ENCODE measurements at regions of chr10 and their contacts with region 1.

Region 1: DNA sequence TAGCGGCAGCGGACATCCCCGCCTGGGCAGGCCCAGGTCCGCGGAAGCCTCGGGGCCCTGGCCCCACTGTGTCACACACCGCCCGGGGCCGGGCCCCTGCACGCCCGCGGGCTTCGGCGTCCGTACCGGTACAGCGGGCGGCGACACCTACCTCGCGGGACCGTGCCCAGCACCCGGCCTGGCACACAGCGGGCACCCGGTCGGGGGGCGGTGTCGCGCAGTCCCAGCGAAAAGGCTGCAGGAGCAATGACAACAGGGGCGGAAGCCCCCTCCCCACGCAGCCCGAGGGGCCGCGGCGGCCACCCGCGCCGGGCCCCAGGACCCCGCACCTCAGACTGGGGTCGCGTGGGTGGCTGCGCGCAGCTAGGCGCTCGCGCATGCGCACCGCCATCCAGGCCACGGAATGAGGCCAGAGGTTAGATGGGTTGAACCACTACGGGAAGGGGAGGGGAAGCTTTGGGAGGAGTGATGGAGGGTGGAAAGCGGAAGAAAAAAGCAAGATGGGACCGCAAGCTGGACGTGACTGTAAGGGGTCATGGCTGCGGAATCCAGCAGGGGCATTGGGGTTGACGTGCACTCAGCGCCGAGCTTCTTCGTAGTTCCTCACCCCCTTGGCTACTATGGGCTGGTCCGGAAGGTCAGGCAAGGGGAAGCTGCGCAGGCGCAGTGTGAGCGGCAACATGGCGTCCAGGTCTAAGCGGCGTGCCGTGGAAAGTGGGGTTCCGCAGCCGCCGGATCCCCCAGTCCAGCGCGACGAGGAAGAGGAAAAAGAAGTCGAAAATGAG is at the starts of genes BCCIP and UROS:
- DNase-seq: peak; percentile 87
- ATAC-seq: peak; percentile 80
- H3K4me3 ChIP-seq: peak within 1 kb of the TSS; percentile 92
- H3K27ac ChIP-seq: peak within 1 kb of the TSS; percentile 97
- H3K4me1 ChIP-seq: peaks cover 9% of the 10 kb centered on the region; the same call in 1 of the 2 replicates
- H3K27me3 ChIP-seq: no peaks in the 10 kb centered on the region
- CTCF ChIP-seq: no peak
- EP300 ChIP-seq: no peak
- POLR2A ChIP-seq: peak; percentile 88
- RAD21 ChIP-seq: no peak
- polyA plus RNA-seq, gene BCCIP: 150 to 158 TPM
- polyA plus RNA-seq, gene UROS: 4.3 to 13.6 TPM

Region 2: DNA sequence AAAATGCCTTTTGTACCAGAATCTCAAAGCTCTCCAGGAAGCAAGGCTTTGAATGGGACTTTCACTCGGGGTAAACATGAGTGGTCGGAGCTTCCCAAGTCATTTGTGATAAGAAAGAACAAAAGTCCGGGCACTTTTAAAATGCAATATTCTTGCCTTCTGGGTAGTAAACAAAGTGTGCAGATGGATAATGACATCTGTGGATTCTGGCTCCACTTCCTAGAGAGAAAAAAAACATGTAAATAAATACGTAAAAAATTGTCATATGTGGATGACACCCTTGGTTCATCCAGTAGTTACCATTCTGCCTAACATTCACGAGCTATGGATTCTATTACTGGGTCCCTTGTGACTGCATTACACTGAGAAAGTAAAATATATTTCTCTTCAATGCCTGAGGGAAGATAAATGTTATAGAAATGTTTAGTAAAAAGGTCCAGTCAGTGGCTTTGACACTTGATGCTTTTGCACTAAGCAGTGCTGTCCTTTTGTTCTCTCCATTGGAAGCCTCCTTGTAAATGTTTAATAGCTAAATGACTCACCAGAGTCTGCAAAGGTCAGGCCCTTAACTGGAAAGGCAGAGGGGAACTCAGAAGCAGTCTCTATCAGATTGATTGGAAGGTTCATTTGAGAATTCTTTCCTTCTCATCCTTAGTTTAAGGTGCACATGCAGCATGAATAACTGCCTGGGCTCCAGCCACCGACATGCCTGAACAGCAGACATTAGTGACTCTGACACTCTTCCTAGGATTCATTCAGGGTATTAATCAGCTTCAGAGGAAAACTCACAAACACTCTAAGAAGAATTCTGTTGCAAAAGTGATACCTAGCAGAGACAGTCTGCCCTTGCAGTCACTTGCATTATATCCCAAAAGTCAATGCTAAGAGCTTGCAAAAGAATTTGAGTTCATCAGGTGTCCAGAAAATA is 115.3 kb before region 1 on chr10:
- CTCF ChIA-PET with region 1: no interaction called
- POLR2A ChIA-PET with region 1: no interaction called
- RAD21 ChIA-PET with region 1: no interaction called
- SMC1A ChIA-PET with region 1: no interaction called
- in situ Hi-C with region 1: no loop called
- intact Hi-C with region 1: no loop called
- DNase-seq: no peak
- ATAC-seq: peak; percentile 66
- H3K4me3 ChIP-seq: no peak overlapping the region
- H3K27ac ChIP-seq: no peak overlapping the region
- H3K4me1 ChIP-seq: no peaks in the 10 kb centered on the region
- H3K27me3 ChIP-seq: no peaks in the 10 kb centered on the region
- CTCF ChIP-seq: no peak
- EP300 ChIP-seq: no peak
- POLR2A ChIP-seq: no peak
- RAD21 ChIP-seq: no peak

Region 3: DNA sequence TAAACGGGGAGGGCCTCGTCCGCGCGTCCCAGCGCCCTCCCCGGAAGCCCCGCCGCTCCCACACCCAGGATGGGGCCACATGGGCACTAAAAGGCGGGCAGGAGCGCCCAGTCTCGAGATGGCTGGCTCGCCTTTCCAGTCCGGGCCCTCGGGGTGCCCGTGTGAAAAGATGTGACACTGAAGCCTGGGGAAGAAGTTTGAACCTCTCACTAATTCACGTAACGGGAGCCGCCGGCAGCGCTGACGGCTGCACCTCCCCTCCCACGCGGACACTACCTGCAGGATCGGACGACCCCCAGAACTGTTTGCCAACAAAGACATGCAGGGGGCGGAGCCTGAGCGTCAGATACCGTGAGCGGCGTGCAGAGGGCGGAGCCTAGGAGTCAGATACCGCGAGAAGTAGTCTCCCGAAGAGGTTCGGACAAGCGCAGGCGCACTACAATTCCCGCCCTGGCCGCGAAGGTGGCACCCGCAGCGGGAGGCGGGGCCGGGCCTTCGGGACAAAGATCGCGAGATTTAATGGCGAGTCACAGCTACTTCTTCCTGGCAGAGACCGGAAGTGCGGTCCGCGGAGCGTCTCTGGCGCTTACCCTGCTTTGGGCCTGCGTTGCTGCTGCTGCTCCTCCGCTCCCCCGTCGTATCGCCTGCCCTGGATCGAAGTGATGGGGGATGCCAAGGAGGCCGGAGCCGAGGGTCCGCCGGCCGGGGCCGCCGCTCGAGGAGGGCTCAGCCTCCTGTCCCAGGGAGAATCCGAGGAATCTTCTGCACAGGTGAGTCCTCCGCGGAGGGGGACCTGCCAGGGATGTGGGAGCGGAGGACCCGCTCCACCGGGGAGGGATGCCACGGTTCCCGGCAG is 103.7 kb before region 1 on chr10 and contains the start of gene EDRF1:
- CTCF ChIA-PET with region 1: no interaction called
- POLR2A ChIA-PET with region 1: interaction called, 6 read pairs
- RAD21 ChIA-PET with region 1: interaction called, 4 read pairs
- SMC1A ChIA-PET with region 1: no interaction called
- in situ Hi-C with region 1: no loop called
- intact Hi-C with region 1: loop called (anchors 1 kb)
- DNase-seq: peak; percentile 97
- ATAC-seq: peak; percentile 93
- H3K4me3 ChIP-seq: peak within 1 kb of the TSS; percentile 85
- H3K27ac ChIP-seq: peak within 1 kb of the TSS; percentile 92
- H3K4me1 ChIP-seq: peaks cover 3% of the 10 kb centered on the region; the same call in 1 of the 2 replicates
- H3K27me3 ChIP-seq: no peaks in the 10 kb centered on the region
- CTCF ChIP-seq: no peak
- EP300 ChIP-seq: no peak
- POLR2A ChIP-seq: peak; percentile 99
- RAD21 ChIP-seq: no peak
- polyA plus RNA-seq, gene EDRF1: 16.8 to 21.2 TPM

Region 4: GRCh38 chr10:125783957-125784356 is 39.1 kb before region 1 on chr10:
- CTCF ChIA-PET with region 1: interaction called, 3 read pairs
- POLR2A ChIA-PET with region 1: no interaction called
- RAD21 ChIA-PET with region 1: interaction called, 10 read pairs
- SMC1A ChIA-PET with region 1: interaction called, 15 read pairs
- in situ Hi-C with region 1: no loop called
- intact Hi-C with region 1: loop called (anchors 5 kb)
- DNase-seq: peak; percentile 60
- ATAC-seq: peak; percentile 94
- H3K4me3 ChIP-seq: no peak overlapping the region
- H3K27ac ChIP-seq: peak overlapping the region; percentile 55
- H3K4me1 ChIP-seq: peaks cover 10% of the 10 kb centered on the region
- H3K27me3 ChIP-seq: no peaks in the 10 kb centered on the region
- CTCF ChIP-seq: peak in 2 of 3 experiments; percentile 18 to 46; a peak in 1 of 6 replicates
- EP300 ChIP-seq: peak in 1 of 2 experiments; percentile 29; a peak in 2 of 4 replicates
- POLR2A ChIP-seq: no peak
- RAD21 ChIP-seq: peak; percentile 33; the same call in 1 of the 2 replicates

Region 5: GRCh38 chr10:125928928-125929585 is 106.0 kb after region 1 on chr10:
- CTCF ChIA-PET with region 1: no interaction called
- POLR2A ChIA-PET with region 1: no interaction called
- RAD21 ChIA-PET with region 1: no interaction called
- SMC1A ChIA-PET with region 1: no interaction called
- in situ Hi-C with region 1: no loop called
- intact Hi-C with region 1: no loop called
- DNase-seq: no peak
- ATAC-seq: no peak
- H3K4me3 ChIP-seq: no peak overlapping the region
- H3K27ac ChIP-seq: no peak overlapping the region
- H3K4me1 ChIP-seq: no peaks in the 10 kb centered on the region
- H3K27me3 ChIP-seq: no peaks in the 10 kb centered on the region
- CTCF ChIP-seq: no peak
- EP300 ChIP-seq: no peak
- POLR2A ChIP-seq: no peak
- RAD21 ChIP-seq: no peak

Region 6: GRCh38 chr10:126247446-126247975 is 424.4 kb after region 1 on chr10:
- CTCF ChIA-PET with region 1: no interaction called
- POLR2A ChIA-PET with region 1: no interaction called
- RAD21 ChIA-PET with region 1: no interaction called
- SMC1A ChIA-PET with region 1: no interaction called
- in situ Hi-C with region 1: no loop called
- intact Hi-C with region 1: no loop called
- DNase-seq: no peak
- ATAC-seq: no peak
- H3K4me3 ChIP-seq: no peak overlapping the region
- H3K27ac ChIP-seq: no peak overlapping the region
- H3K4me1 ChIP-seq: no peaks in the 10 kb centered on the region
- H3K27me3 ChIP-seq: no peaks in the 10 kb centered on the region
- CTCF ChIP-seq: no peak
- EP300 ChIP-seq: no peak
- POLR2A ChIP-seq: no peak
- RAD21 ChIP-seq: no peak

Region 7: DNA sequence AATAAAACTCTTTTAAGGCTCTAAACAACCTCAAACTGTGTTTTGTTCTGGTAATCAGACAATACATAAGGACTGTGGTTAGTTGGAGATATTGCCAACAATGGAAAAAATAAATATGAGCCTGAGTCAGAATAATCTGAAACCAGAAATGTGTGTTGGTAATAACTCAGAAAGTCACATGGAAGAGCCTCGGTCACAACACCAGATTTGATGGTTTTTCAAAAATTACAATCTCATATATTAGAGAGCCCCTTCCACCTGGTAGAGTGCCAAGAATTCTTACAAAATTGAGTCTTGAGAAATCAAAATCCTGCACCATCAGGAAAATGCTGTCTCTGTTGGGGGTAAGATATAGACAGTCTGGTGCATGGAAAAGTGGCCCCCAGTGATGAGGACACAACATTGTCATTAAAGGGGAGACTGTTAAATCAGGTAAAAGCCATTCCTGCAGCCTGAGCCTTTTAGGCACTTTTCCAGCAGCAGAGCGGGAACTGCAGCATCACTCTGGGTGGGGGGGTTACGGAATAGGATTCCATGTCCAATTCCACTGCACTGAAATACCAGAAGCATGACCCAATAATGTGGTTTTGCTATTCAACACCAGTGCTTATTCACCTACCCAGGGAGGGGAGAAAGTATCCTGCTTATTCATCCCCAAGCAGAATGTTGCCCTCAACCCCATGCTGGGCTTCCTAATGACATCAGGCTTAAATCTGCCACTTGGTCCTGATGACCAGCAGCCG is 574.7 kb after region 1 on chr10:
- CTCF ChIA-PET with region 1: no interaction called
- POLR2A ChIA-PET with region 1: no interaction called
- RAD21 ChIA-PET with region 1: no interaction called
- SMC1A ChIA-PET with region 1: no interaction called
- in situ Hi-C with region 1: no loop called
- intact Hi-C with region 1: no loop called
- DNase-seq: no peak
- ATAC-seq: no peak
- H3K4me3 ChIP-seq: no peak overlapping the region
- H3K27ac ChIP-seq: no peak overlapping the region
- H3K4me1 ChIP-seq: no peaks in the 10 kb centered on the region
- H3K27me3 ChIP-seq: no peaks in the 10 kb centered on the region
- CTCF ChIP-seq: no peak
- EP300 ChIP-seq: no peak
- POLR2A ChIP-seq: no peak
- RAD21 ChIP-seq: no peak

Measured in GM12878 (cell line).